ENCODE measurements at regions of chr11 and their contacts with region 1.

Region 1: DNA sequence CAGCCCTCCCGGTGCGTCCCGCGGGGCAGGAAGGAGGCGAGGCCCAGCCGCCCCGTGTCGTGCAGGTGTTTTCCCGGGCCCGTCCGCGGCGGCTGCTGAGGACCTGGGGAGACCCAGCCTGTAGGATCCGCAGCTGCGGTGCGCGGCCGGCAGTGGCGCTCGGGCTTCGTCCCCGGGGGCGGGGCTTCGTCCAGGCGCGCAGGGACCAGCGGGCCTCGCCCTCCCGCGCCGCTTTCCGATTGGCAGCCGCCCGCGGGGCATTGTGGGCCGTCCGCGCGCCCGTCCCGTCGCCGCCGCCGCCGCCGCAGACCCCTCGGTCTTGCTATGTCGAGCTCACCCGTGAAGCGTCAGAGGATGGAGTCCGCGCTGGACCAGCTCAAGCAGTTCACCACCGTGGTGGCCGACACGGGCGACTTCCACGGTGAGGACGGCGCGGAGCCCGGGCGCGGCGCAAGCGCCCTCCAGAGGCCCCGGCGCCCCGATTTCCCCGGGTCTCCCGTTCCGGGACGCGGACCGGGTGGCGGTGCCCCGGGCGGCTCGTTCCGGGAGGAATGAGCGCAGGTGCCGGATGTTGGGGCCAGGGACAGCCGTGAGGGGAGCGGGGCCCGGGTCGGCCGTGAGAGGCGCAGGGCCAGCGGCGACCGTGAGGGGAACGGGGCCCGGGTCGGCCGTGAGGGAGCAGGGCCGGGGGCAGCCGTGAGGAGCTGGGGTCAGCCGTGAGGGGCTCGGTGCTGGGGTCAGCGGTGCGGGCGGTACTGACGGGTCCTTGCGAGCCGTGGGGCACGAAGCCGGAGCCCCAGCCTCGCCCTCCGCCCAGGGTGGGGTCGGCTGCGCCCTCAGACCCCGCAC is at the start of gene TALDO1:
- DNase-seq: peak; percentile 94
- ATAC-seq: peak; percentile 87
- H3K4me3 Mint-ChIP-seq: peak within 1 kb of the TSS; percentile 80
- H3K27ac Mint-ChIP-seq: peak within 1 kb of the TSS; percentile 96
- H3K4me1 Mint-ChIP-seq: peaks cover 36% of the 10 kb centered on the region
- H3K27me3 Mint-ChIP-seq: no peaks in the 10 kb centered on the region
- CTCF ChIP-seq: no peak
- total RNA-seq, gene TALDO1: 314 to 352 TPM (median 343 TPM) in 3 replicates

Region 2: DNA sequence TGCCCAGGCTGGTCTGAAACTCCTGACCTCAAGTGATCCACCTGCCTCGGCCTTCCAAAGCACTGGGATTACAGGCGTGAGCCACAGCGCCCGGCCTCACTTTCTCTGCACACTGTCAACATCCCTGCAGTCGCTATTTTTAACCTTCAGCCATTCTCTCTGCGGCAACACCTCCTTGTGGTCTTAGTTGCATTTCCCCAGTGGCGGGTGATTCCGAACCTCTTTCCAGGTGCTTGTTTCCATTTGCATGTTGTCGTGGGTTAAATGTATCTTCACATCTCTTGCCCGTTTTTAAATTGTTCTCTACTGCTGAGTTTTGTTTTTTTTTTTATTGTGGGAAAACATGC is 118.2 kb before region 1 on chr11:
- CTCF ChIA-PET with region 1: no interaction called
- POLR2A ChIA-PET with region 1: no interaction called
- DNase-seq: peak; percentile 16
- ATAC-seq: peak; percentile 32
- H3K4me3 Mint-ChIP-seq: peak overlapping the region; percentile 55
- H3K27ac Mint-ChIP-seq: peak overlapping the region; percentile 34
- H3K4me1 Mint-ChIP-seq: peaks cover 13% of the 10 kb centered on the region
- H3K27me3 Mint-ChIP-seq: peaks cover 27% of the 10 kb centered on the region
- CTCF ChIP-seq: no peak

Region 3: DNA sequence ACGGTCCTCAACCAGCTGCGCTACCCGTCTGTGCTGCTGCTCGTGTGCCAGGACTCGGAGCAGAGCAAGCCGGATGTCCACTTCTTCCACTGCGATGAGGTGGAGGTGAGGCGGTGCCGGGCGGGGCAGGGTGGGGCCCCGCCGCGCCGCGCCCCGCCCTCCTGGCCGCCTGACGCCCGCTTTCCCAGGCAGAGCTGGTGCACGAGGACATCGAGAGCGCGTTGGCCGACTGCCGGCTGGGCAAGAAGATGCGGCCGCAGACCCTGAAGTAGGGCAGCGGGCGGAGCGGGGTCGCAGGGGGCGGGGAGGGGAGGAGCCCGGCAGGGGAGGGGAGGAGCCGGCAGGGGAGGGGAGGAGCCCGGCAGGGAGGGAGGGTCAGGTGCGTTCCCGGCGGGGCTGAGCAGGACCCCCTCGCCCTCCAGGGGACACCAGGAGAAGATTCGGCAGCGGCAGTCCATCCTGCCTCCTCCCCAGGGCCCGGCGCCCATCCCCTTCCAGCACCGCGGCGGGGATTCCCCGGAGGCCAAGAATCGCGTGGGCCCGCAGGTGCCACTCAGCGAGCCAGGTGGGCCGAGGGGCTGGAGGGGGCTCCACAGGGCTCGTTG is 26.6 kb before region 1 on chr11:
- CTCF ChIA-PET with region 1: interaction called, 37 read pairs
- POLR2A ChIA-PET with region 1: interaction called, 8 read pairs
- DNase-seq: peak; percentile 87
- ATAC-seq: peak; percentile 83
- H3K4me3 Mint-ChIP-seq: peak overlapping the region; percentile 47
- H3K27ac Mint-ChIP-seq: no peak overlapping the region
- H3K4me1 Mint-ChIP-seq: peaks cover 13% of the 10 kb centered on the region
- H3K27me3 Mint-ChIP-seq: peaks cover 16% of the 10 kb centered on the region
- CTCF ChIP-seq: no peak

Measured in WTC11 (cell line).